ENCODE measurements at regions of chr12 and their contacts with region 1.

Region 1: GRCh38 chr12:121095544-121096198 is 37.0 kb upstream of the P2RX7 start:
- DNase-seq: peak; percentile 94
- H3K4me3 Mint-ChIP-seq: peak overlapping the region; percentile 87
- H3K27ac Mint-ChIP-seq: peak overlapping the region; percentile 81
- H3K4me1 Mint-ChIP-seq: peaks cover 32% of the 10 kb centered on the region
- H3K27me3 Mint-ChIP-seq: peaks cover 14% of the 10 kb centered on the region

Region 2: DNA sequence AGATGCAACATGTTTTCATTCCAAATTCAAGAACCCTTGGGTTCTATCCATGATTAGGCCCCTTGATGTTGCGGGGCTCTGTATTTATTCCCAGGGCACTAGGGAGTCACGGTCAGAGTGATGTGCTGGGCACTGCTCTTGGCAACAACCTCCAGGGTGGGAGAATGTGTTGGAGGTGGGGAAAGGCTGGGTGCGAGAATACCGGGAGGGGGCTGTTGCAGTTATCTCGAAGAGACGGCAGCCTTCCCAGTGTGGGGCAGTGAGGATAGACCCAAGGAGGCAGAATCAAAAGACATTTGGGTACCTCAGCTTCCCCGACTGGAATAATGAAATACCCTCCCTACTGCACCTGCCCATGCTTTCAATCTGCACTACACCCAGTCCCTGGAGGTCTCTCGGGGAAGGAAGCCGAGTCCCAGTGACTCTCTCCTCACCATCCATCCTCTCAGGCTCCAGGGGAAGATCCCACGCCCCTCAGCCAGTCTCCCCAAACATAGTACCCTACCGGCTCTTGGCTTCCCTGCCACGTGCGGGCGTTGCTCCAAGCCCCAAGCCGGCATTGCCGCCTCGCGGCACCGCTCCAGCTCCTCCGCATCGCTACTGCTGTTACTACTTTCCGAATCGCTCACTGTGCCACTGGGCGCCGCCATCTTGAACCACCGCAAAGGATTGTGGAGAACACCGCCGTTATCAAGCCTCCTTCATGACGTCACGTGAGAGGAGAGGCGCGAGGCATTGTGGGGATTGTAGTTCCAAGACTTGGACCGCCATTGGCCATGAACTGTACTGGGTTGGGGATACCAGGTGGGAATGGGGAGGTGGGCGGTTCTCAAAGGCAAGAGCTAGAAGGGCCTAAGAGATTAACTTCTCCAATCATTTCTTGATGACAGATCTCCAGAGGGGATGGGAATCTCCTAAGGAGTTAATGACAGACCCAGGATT is 79.6 kb before region 1 on chr12 and contains the start of gene C12orf43:
- intact Hi-C with region 1: loop called (anchors 1 kb)
- DNase-seq: peak; percentile 98
- H3K4me3 Mint-ChIP-seq: peak within 1 kb of the TSS; percentile 98
- H3K27ac Mint-ChIP-seq: peak within 1 kb of the TSS; percentile 99
- H3K4me1 Mint-ChIP-seq: peaks cover 20% of the 10 kb centered on the region
- H3K27me3 Mint-ChIP-seq: no peaks in the 10 kb centered on the region
- total RNA-seq, gene C12orf43: 32.5 and 35.3 TPM in 2 replicates

Region 3: GRCh38 chr12:121128970-121129810 is 33.5 kb after region 1 on chr12:
- intact Hi-C with region 1: no loop called
- DNase-seq: peak; percentile 94
- H3K4me3 Mint-ChIP-seq: peak overlapping the region; percentile 79
- H3K27ac Mint-ChIP-seq: peak overlapping the region; percentile 96
- H3K4me1 Mint-ChIP-seq: peaks cover 70% of the 10 kb centered on the region
- H3K27me3 Mint-ChIP-seq: no peaks in the 10 kb centered on the region